Endothelial cell of umbilical vein (primary cell): ENCODE measurements at regions of chr17 and their contacts with region 1.

Region 1: GRCh38 chr17:68457539-68458259 is 403 bp upstream of the WIPI1 start:
- DNase-seq: peak; percentile 99
- H3K4me3 ChIP-seq: peak overlapping the region; percentile 20 to 54 (median 48)
- H3K27ac ChIP-seq: no peak overlapping the region
- H3K4me1 ChIP-seq: peaks cover 18% of the 10 kb centered on the region
- H3K27me3 ChIP-seq: no peaks in the 10 kb centered on the region
- CTCF ChIP-seq: no peak
- POLR2A ChIP-seq: peak; percentile 31

Region 2: DNA sequence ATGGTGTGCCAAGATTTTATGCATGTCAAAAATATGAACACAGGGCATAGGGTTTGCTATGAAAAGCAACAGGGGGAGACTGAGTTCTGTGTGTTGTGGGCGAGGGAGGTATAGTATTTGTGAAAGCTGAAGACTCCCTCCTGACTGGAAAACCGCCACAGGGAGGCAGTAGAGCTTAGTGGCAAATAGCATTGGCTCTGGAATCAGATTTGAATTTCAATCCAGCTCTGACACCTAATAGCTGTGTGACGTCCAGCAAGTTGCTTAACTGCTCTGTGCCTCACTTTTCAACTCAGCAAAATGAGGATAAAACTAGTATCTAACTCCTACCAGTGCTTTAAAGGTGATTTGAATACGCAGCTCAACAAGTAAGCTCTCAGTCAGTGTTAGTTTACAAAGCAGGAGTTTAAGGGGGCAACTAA is 400.2 kb before region 1 on chr17:
- CTCF ChIA-PET with region 1: no interaction called
- POLR2A ChIA-PET with region 1: no interaction called
- dilution Hi-C with region 1: no loop called
- intact Hi-C with region 1: loop called (anchors 2 kb)
- DNase-seq: peak; percentile 53
- H3K4me3 ChIP-seq: no peak overlapping the region
- H3K27ac ChIP-seq: no peak overlapping the region
- H3K4me1 ChIP-seq: peaks cover 32% of the 10 kb centered on the region
- H3K27me3 ChIP-seq: no peaks in the 10 kb centered on the region
- CTCF ChIP-seq: peak; percentile 46 to 52
- POLR2A ChIP-seq: no peak

Region 3: DNA sequence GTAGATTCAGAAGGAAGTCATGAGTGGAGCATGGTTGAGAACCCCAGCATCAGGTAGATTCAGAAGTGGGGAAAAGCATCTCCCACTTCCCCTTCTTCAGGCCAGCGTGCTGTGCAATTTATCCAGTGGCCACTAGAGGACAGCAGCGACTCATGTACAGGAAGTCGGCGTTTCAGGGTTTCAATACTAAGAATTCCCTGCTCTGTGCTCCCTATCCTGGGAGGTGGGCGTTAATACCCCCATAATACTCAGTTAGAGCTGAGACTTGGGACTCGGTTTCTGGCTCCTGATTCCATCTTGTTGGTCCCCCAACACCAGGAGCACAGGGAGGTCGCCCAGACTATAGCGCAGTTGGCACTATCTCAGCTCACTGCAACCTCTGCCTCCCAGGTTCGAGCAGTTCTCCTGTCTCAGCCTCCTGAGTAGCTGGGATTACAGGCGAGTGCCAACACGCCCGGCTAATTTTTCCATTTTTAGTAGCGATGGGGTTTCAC is 285.2 kb before region 1 on chr17:
- CTCF ChIA-PET with region 1: interaction called, 28 read pairs
- POLR2A ChIA-PET with region 1: no interaction called
- dilution Hi-C with region 1: no loop called
- intact Hi-C with region 1: no loop called
- DNase-seq: peak; percentile 62
- H3K4me3 ChIP-seq: no peak overlapping the region
- H3K27ac ChIP-seq: no peak overlapping the region
- H3K4me1 ChIP-seq: no peaks in the 10 kb centered on the region
- H3K27me3 ChIP-seq: no peaks in the 10 kb centered on the region
- CTCF ChIP-seq: peak; percentile 83 to 84
- POLR2A ChIP-seq: no peak

Region 4: GRCh38 chr17:68247445-68248198 is 210.1 kb before region 1 on chr17 and contains the start of gene AMZ2:
- CTCF ChIA-PET with region 1: interaction called, 7 read pairs
- POLR2A ChIA-PET with region 1: interaction called, 12 read pairs
- dilution Hi-C with region 1: no loop called
- intact Hi-C with region 1: loop called (anchors 5 kb)
- DNase-seq: peak; percentile 96
- H3K4me3 ChIP-seq: peak within 1 kb of the TSS; percentile 41 to 63 (median 51)
- H3K27ac ChIP-seq: peak within 1 kb of the TSS; percentile 54
- H3K4me1 ChIP-seq: peaks cover 8% of the 10 kb centered on the region
- H3K27me3 ChIP-seq: no peaks in the 10 kb centered on the region
- CTCF ChIP-seq: no peak
- POLR2A ChIP-seq: peak; percentile 89
- total RNA-seq, gene AMZ2: 53.7 and 57.3 TPM in 2 replicates

Region 5: GRCh38 chr17:68435876-68436842 is 21.5 kb before region 1 on chr17:
- CTCF ChIA-PET with region 1: interaction called, 35 read pairs
- POLR2A ChIA-PET with region 1: no interaction called
- dilution Hi-C with region 1: no loop called
- intact Hi-C with region 1: loop called (anchors 1 kb)
- DNase-seq: peak; percentile 83
- H3K4me3 ChIP-seq: no peak overlapping the region
- H3K27ac ChIP-seq: peak overlapping the region; percentile 63
- H3K4me1 ChIP-seq: peaks cover 30% of the 10 kb centered on the region
- H3K27me3 ChIP-seq: no peaks in the 10 kb centered on the region
- CTCF ChIP-seq: peak; percentile 89 to 95
- POLR2A ChIP-seq: no peak

Region 6: DNA sequence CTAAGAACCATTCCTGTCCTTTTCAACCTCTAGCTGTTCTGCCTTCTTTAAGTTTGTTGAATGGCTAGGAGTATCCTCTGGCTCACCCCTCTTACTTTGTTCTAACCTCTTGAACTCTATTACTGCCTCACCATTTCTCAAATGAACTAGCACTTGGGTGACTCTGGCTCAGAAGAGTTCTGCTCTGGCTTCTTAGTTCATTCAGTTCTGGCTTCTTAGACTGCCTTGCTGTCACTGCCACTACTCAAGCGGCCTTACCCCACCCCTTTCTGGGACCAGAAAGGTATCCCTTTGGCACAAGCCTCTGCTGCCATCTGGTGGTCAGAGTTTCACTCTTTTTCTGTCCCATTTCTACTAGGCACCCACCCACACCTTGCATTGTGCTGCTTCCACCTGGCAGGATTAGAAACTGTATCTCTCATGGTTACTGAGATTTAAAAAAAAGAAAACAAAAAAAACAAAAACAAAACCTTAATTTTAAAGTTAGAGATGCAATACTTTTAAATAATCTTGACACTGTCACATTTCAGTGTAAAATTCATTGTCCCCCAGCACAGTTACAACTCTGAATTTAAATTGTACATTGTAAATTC is 777.7 kb after region 1 on chr17:
- CTCF ChIA-PET with region 1: no interaction called
- POLR2A ChIA-PET with region 1: no interaction called
- dilution Hi-C with region 1: no loop called
- intact Hi-C with region 1: loop called (anchors 5 kb)
- DNase-seq: peak; percentile 90
- H3K4me3 ChIP-seq: no peak overlapping the region
- H3K27ac ChIP-seq: peak overlapping the region; percentile 24
- H3K4me1 ChIP-seq: peaks cover 4% of the 10 kb centered on the region
- H3K27me3 ChIP-seq: no peaks in the 10 kb centered on the region
- CTCF ChIP-seq: peak; percentile 67 to 68
- POLR2A ChIP-seq: no peak